ENCODE measurements at regions of chr11 and their contacts with region 1.

Region 1: DNA sequence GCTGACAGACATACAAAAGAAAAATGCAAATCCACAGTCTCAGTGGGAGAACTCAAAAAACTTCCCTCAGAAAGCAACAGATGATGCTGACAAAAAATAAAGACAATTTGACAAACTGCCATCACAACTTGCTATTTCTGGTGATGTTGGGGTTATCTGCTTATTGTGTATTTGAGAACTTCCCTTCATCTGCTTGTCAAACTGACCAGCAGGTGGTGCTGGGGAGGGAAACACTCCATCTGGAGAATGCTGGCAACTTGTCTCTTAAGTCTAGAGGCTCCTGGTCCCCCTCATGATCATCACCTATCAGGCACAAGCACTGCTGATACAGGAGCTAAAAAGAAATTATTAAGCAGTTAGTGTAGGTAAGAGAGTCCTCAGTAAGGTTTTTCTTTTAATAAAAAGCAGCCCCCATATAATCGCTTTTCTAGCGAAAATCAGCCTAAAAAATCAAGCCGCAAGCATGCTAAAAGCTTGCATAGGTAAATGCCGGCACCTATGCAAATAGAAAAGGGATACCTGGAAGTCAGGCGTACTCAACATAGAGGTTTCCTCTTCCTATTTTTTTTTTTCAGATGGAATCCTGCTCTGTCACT is 9.8 kb upstream of the FAM111B start:
- DNase-seq: peak; percentile 90
- H3K4me3 Mint-ChIP-seq: no peak overlapping the region
- H3K27ac Mint-ChIP-seq: no peak overlapping the region
- H3K4me1 Mint-ChIP-seq: peaks cover 12% of the 10 kb centered on the region
- H3K27me3 Mint-ChIP-seq: peaks cover 20% of the 10 kb centered on the region

Region 2: GRCh38 chr11:58999291-58999680 is 97.9 kb before region 1 on chr11:
- intact Hi-C with region 1: no loop called
- DNase-seq: no peak
- H3K4me3 Mint-ChIP-seq: no peak overlapping the region
- H3K27ac Mint-ChIP-seq: no peak overlapping the region
- H3K4me1 Mint-ChIP-seq: no peaks in the 10 kb centered on the region
- H3K27me3 Mint-ChIP-seq: peaks cover 1% of the 10 kb centered on the region

Region 3: GRCh38 chr11:59135648-59136461 is 38.6 kb after region 1 on chr11:
- intact Hi-C with region 1: loop called (anchors 1 kb)
- DNase-seq: peak; percentile 97
- H3K4me3 Mint-ChIP-seq: peak overlapping the region; percentile 73
- H3K27ac Mint-ChIP-seq: peak overlapping the region; percentile 70
- H3K4me1 Mint-ChIP-seq: peaks cover 12% of the 10 kb centered on the region
- H3K27me3 Mint-ChIP-seq: no peaks in the 10 kb centered on the region

Region 4: GRCh38 chr11:59158206-59159068 is 61.2 kb after region 1 on chr11:
- intact Hi-C with region 1: loop called (anchors 1 kb)
- DNase-seq: peak; percentile 90
- H3K4me3 Mint-ChIP-seq: no peak overlapping the region
- H3K27ac Mint-ChIP-seq: no peak overlapping the region
- H3K4me1 Mint-ChIP-seq: peaks cover 7% of the 10 kb centered on the region
- H3K27me3 Mint-ChIP-seq: peaks cover 15% of the 10 kb centered on the region

Measured in activated CD4-positive, alpha-beta T cell treated with anti-CD3 and anti-CD28 coated beads, Interleukin-2, amount 10 ng/mL, durations not matched to agents 24 days and 14 days (primary cell).